ENCODE measurements at regions of chr2 and their contacts with region 1.

Region 1: DNA sequence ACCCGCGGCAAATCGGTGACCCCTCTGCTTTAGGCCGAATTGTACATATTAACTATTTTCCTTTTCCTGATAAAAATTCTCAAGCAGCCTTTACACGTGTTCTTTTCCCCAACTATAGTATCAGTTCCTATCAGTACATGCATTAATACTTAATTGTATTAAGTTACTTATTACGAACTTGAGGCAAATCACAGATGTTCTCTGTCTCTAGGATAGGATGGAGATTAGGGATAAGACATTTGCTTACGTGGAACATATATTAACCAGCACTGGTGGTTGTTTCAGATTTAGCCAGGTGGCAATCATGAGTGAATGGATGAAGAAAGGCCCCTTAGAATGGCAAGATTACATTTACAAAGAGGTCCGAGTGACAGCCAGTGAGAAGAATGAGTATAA is 675 bp downstream of the GEMIN6 start:
- DNase-seq: no peak
- ATAC-seq: no peak
- H3K4me3 ChIP-seq: peak overlapping the region; percentile 42 to 90 (median 68)
- H3K27ac ChIP-seq: peak overlapping the region in 7 of 12 donors; percentile 47 to 80 (median 74)
- H3K4me1 ChIP-seq: peaks cover 0 to 15% (median 7%) of the 10 kb centered on the region in 12 donors
- H3K27me3 ChIP-seq: no peaks in the 10 kb centered on the region
- CTCF ChIP-seq: no peak
- POLR2A ChIP-seq: no peak

Region 2: DNA sequence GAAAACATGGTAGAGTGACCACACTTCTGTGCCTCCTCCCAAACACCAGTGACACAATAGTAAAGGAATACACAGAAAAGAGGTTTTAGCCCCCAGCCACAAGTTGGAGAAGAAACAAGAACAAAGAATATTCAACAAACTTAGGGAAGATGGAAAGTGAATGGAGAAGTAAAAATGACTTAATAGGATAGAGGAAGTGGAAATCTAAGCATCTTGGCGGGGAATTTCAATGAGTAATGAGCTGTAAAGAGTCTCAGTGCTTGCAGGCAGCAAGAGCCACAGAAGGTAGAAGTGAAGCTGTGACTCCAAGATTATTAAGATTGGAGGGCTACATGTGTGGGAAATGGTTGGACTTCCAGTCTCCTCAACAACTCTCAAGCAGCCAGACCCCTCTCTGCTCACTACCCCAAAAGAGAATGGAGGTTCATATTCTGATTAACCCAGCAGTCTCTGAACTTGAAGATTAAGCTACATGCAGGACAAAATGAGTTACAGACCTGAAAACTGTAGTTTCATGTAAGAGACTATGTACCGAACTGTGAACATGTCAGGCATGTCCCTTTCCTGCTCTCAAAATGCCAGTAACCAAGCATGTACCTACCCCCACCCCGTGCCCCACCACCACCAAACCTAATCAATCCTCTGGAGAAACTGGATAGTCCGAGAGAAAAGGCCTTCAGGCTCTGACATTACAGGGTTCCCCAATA is 159.1 kb before region 1 on chr2:
- intact Hi-C with region 1: no loop called
- DNase-seq: no peak
- ATAC-seq: peak in 3 of 4 donors; percentile 49 to 58 (median 51)
- H3K4me3 ChIP-seq: no peak overlapping the region
- H3K27ac ChIP-seq: peak overlapping the region in 5 of 12 donors; percentile 13 to 76 (median 57)
- H3K4me1 ChIP-seq: peaks cover 0 to 48% (median 7%) of the 10 kb centered on the region in 12 donors
- H3K27me3 ChIP-seq: no peaks in the 10 kb centered on the region
- CTCF ChIP-seq: no peak
- POLR2A ChIP-seq: no peak

Region 3: DNA sequence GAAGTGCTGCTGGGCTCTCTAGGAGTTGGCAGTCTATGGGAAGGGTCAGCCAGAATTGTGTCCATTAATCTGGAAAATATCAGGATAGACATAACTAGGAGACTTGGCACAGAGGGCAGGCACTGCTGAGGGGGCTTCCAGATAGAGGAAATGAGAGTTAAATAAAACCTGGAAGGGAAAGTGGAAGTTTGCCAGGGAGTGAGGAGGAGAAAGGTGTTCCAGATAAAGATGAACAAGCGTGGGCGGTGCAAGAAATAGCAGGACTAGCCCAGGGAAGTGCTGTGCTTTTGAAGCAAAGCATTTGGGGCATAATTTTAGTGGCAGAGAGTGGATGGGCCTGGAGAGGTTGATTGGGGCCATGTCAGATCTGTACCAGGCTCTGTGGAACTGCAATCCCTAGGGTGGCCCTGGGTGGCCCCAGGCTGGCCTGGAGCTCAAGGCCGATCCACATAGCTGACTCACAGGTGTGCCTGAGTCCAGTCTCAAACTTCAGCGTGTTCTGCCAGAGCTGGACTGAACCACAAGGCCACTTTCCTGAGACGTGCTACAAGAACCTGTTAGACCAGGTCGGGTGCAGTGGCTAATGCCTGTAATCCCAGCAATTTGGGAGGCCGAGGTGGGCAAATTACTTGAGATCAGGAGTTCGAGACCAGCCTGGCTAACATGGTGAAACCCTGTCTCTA is 85.9 kb before region 1 on chr2:
- intact Hi-C with region 1: no loop called
- DNase-seq: no peak
- ATAC-seq: peak in 1 of 4 donors; percentile 38
- H3K4me3 ChIP-seq: no peak overlapping the region
- H3K27ac ChIP-seq: no peak overlapping the region
- H3K4me1 ChIP-seq: peaks cover 0 to 41% (median 0%) of the 10 kb centered on the region in 12 donors
- H3K27me3 ChIP-seq: no peaks in the 10 kb centered on the region
- CTCF ChIP-seq: no peak
- POLR2A ChIP-seq: no peak

Region 4: GRCh38 chr2:38709567-38710194 is 69.0 kb before region 1 on chr2:
- intact Hi-C with region 1: no loop called
- DNase-seq: no peak
- ATAC-seq: no peak
- H3K4me3 ChIP-seq: no peak overlapping the region
- H3K27ac ChIP-seq: no peak overlapping the region
- H3K4me1 ChIP-seq: peaks cover 0 to 8% (median 0%) of the 10 kb centered on the region in 12 donors
- H3K27me3 ChIP-seq: no peaks in the 10 kb centered on the region
- CTCF ChIP-seq: no peak
- POLR2A ChIP-seq: no peak

Region 5: GRCh38 chr2:38720613-38721241 is 58.0 kb before region 1 on chr2:
- intact Hi-C with region 1: no loop called
- DNase-seq: peak; percentile 75 to 84 (median 80)
- ATAC-seq: peak; percentile 86 to 95 (median 94)
- H3K4me3 ChIP-seq: no peak overlapping the region
- H3K27ac ChIP-seq: peak overlapping the region; percentile 2 to 76 (median 48)
- H3K4me1 ChIP-seq: peaks cover 0 to 35% (median 21%) of the 10 kb centered on the region in 12 donors
- H3K27me3 ChIP-seq: no peaks in the 10 kb centered on the region
- CTCF ChIP-seq: no peak
- POLR2A ChIP-seq: no peak

Region 6: DNA sequence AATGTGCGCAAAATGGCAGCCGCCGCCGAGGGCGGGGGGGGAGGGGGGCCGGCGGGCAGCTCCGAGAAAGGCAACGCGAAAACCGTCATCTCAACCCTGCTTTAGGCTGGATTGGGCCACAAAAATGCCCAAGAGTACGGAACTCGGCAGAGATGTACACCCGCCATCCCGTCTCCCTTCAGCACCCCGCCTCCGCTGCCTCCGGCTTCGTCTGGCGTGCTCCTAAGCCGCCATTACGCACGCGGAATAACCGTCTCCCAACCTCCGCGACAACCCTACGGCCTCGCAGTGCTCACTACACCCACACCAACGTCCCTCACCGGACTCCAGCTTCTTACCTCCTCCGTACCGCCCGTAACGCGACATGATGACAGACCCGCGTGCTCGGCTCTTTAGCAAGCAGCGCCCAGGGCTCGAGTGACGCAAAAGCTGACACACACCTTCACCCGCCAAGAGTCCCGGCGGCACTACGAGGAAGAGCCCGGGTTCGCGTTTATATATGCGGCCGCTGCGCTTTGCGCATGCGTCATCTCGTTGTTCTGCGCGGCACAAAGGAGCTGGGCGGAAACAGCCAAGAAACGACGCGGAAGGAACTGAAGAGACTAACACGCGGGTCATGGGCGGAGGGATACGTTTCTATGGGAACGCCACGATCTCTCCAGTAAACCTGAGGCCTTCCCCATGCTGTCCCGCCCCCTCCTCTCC is 27.6 kb before region 1 on chr2 and contains the start of gene SRSF7:
- intact Hi-C with region 1: loop called in 1 of 10 experiments (anchors 1 kb)
- DNase-seq: peak; percentile 97 to 98 (median 97)
- ATAC-seq: peak; percentile 89 to 93 (median 90)
- H3K4me3 ChIP-seq: peak within 1 kb of the TSS; percentile 61 to 98 (median 86)
- H3K27ac ChIP-seq: peak within 1 kb of the TSS; percentile 90 to 99 (median 98)
- H3K4me1 ChIP-seq: peaks cover 0 to 63% (median 38%) of the 10 kb centered on the region in 12 donors
- H3K27me3 ChIP-seq: no peaks in the 10 kb centered on the region
- CTCF ChIP-seq: no peak
- POLR2A ChIP-seq: peak; percentile 86 to 100
- total RNA-seq, gene SRSF7: 28.1 to 75.0 (median 43.9) TPM

Measured in heart left ventricle (tissue), 16 donors.